ENCODE measurements at regions of chr1 and their contacts with region 1.

Region 1: DNA sequence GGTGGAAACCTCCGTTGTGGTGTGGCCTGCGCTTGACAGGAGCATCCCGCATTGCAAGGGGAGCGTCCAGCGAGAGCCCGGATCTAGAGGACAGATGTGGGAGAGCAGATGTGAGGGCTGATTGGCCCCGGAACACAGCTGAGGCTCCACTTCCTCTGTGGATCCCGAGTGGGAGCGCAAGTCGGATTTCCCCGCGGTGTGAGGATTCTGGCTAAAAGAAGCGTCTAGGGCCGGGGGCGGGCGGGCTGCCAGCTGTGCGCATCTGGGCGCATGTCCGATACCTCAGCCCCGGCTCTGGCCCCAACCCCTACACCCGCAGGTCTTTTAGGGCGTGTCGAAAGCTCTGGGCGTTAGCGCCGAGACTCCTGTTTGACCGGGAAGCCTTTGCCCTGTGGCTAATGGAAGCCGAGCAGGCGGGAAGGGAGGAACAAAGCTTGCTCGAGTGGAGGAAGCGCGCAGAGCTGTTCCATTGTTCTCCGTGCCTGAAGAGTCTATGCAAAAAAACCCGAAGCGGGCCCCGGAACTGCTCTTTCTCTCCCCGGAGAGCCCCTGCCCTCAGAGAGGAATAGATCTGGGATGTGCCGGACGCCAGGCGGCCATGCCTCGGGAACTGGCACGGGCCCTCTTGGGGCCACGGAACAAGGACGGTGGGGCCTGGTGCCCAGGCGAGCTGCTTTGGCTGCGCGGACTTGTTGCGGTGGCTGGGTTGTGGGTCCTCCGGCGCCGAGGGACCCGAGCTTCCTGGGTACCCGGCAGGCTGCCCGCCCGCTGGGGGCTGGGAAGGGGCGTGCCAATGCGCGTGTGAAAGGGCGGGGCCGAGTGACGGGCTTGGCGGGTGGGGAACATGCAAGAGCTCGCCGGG is 111.1 kb downstream of the NAV1 start:
- DNase-seq: peak; percentile 56 to 92 (median 86)
- H3K4me3 ChIP-seq: peak overlapping the region; percentile 44 to 88 (median 73)
- H3K27ac ChIP-seq: peak overlapping the region in 56 of 59 donors; percentile 24 to 91 (median 78)
- H3K27me3 ChIP-seq: no peaks in the 10 kb centered on the region
- CTCF ChIP-seq: peak in 9 of 56 donors; percentile 5 to 25 (median 15)

Region 2: DNA sequence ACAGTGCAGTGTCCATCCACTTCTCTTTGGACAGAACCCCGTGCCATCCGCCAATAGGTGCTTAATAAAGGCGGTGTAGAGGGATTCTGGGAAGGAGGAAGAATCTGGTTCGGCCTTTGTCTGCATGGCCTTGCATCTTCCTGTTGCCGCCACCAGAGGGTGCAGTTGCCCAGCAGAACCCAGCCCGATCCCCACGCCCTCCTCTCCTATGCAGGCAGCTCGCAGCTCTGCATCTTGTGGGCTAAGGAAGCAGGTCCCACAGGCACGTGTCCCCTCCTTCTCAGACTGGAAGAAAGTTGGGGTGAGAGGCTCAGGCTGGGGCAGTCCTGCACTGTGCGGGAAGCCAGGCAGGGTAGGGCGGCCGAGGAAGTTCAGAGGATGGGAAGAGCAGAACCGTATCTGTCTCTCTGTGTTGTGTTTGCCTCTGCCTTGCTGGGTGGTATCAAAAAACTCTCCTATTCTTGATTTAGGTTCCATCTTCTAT is 90.3 kb before region 1 on chr1:
- intact Hi-C with region 1: loop called (anchors 2 to 5 kb)
- DNase-seq: peak; percentile 81 to 92 (median 84)
- H3K4me3 ChIP-seq: peak overlapping the region in 3 of 59 donors; percentile 12 to 42 (median 21)
- H3K27ac ChIP-seq: peak overlapping the region in 44 of 59 donors; percentile 3 to 97 (median 50)
- H3K27me3 ChIP-seq: no peaks in the 10 kb centered on the region
- CTCF ChIP-seq: peak; percentile 90 to 100 (median 98)

Region 3: DNA sequence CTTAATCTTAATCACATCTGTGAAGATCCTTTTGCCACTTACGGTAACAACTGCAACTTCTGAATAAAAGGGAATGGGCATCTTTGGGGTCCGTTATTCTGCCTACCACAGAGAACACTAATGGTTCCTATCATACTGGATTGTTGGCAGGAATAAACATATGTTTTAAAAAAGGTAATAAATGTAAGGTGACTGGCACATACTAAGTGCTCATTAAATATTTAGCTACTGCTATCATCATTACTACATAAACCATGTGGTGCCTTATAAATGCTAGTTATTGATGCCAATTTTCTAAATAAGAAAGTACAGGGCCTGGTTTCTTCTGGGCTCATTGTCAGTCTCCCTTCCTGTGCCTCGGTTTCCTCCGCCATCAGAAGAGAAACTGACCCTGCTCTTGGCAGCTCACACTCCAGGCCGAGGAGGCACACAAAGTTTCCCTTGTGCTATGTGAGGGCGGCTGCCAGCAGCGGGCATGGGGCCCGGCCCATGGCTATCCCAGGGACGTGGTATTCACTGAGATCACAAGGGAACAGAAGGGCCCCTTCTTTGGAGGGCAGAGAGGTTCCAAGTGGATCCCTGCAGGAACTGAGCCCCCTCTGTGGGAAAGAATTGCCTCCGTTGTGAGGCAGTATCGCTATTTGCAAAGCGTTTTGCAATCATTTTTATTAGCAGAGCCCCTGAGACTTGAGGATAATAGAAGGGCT is 84.8 kb before region 1 on chr1:
- intact Hi-C with region 1: loop called (anchors 2 to 5 kb)
- DNase-seq: peak; percentile 26 to 98 (median 93)
- H3K4me3 ChIP-seq: peak overlapping the region in 16 of 59 donors; percentile 4 to 37 (median 18)
- H3K27ac ChIP-seq: peak overlapping the region; percentile 23 to 98 (median 93)
- H3K27me3 ChIP-seq: no peaks in the 10 kb centered on the region
- CTCF ChIP-seq: peak in 14 of 56 donors; percentile 16 to 59 (median 32)

Region 4: GRCh38 chr1:201696217-201696761 is 46.3 kb after region 1 on chr1:
- intact Hi-C with region 1: loop called (anchors 2 to 5 kb)
- DNase-seq: peak in 9 of 10 donors; percentile 71 to 89 (median 83)
- H3K4me3 ChIP-seq: peak overlapping the region in 6 of 59 donors; percentile 0 to 33 (median 4)
- H3K27ac ChIP-seq: peak overlapping the region in 56 of 59 donors; percentile 10 to 88 (median 67)
- H3K27me3 ChIP-seq: no peaks in the 10 kb centered on the region
- CTCF ChIP-seq: peak in 9 of 56 donors; percentile 9 to 31 (median 17)

Region 5: DNA sequence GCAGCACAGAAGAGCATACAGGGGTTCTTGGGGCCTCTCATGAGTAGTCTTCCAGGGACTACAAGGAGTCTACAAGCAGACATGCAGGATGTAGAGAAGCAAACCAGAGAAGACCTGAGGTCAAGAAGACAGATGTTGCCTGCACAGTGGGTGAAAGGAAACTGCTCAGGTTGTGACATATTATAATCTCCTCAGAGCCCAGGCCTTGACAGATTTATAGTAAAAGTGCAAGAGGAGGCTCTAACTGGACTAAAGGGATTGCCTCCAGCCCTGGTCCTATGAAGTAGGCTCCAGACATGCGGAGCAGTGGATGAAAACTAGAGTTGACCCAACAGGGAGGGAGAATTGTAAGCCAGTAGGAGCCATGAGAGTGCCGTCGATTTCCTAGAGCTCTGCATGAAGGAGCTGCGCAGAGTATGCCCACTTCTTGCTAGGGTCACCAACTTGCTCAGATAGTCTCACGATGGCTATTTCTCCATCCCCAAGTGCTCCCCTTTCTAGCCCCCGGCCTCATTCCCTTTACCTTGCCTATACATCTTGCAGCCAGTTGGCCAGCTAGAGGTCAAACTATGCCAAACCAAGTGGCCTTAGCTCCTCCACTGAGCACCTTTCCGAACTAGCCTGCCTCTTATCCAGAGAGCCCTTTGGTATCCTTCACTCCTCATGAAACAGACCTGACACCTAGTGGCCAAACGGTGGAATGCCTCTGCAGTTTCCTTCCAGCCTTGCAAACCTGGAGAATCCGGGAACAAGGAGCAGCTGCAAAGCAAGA is 142.7 kb after region 1 on chr1:
- intact Hi-C with region 1: loop called in 1 of 2 experiments (anchors 5 kb)
- DNase-seq: peak; percentile 65 to 90 (median 83)
- H3K4me3 ChIP-seq: no peak overlapping the region
- H3K27ac ChIP-seq: peak overlapping the region; percentile 85 to 99 (median 96)
- H3K27me3 ChIP-seq: no peaks in the 10 kb centered on the region
- CTCF ChIP-seq: peak; percentile 88 to 99 (median 98)